ENCODE measurements at regions of chr2 and their contacts with region 1.

Region 1: DNA sequence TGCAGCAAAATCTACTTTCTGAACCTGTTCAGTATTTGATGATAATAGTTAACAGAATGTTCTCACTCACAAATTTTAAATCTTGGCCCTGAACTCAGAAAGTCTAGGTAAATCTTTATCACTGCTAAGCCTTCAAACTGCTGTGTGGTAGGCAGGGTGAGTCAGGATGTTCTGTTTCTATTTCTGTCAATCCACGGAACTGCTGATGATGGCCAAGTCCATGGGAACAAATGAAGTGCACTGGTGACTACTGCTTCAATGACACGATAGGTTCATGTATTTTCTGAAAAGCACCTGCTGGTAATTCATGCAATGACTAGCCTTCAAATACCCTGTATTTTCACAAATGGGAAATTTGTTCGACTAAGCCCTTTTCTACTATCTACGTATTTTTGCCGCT is 14.2 kb downstream of the NIFK start:
- DNase-seq: no peak
- H3K4me3 ChIP-seq: no peak overlapping the region
- H3K27ac ChIP-seq: no peak overlapping the region
- H3K4me1 ChIP-seq: no peaks in the 10 kb centered on the region
- H3K27me3 ChIP-seq: no peaks in the 10 kb centered on the region
- CTCF ChIP-seq: no peak
- POLR2A ChIP-seq: no peak

Region 2: DNA sequence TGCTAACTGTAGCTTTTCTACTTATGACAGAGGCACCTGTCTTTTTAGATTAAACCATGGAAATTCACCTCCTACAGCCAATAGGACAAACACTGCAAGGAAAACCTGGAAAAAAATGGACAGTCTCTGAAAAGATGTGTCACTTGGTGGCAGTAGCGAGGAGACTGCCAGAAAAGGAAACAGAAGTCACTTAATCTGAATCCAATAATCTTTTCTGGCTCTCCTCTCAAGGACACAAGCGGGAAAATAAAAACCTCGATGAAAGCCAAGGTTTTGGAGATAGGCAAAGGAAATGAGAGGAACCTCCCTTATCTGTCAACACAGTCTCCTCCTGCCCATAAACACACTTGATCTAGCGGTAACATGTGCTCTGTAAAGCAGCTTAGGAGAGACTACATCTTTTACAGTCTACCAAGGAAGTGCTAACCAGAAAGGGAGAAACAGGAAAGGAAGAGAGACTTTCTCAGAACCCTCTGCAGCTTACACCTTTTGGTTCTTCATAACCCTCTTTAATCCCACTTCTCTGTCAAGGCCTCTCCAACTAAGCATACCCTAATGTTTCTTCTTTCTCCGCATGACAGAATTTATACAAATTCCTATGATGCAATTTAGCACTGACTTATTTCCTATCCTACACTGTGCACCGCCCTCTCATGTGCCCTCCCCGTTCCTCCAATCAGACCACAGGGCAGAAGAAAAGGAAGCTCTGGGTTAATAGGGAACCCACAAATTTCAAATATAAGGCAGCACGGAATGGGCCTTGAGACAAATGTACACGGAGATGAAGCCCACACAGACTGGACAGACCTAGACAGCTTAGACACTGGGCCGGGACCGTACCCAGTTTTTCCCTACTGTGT is 126.0 kb before region 1 on chr2:
- CTCF ChIA-PET with region 1: interaction called, 11 read pairs
- POLR2A ChIA-PET with region 1: no interaction called
- dilution Hi-C with region 1: no loop called
- intact Hi-C with region 1: loop called (anchors 1 kb)
- DNase-seq: peak; percentile 81
- H3K4me3 ChIP-seq: peak overlapping the region in 2 of 3 experiments; percentile 3 to 62
- H3K27ac ChIP-seq: peak overlapping the region; percentile 56
- H3K4me1 ChIP-seq: peaks cover 14% of the 10 kb centered on the region
- H3K27me3 ChIP-seq: no peaks in the 10 kb centered on the region
- CTCF ChIP-seq: peak; percentile 29 to 35
- POLR2A ChIP-seq: no peak

Region 3: DNA sequence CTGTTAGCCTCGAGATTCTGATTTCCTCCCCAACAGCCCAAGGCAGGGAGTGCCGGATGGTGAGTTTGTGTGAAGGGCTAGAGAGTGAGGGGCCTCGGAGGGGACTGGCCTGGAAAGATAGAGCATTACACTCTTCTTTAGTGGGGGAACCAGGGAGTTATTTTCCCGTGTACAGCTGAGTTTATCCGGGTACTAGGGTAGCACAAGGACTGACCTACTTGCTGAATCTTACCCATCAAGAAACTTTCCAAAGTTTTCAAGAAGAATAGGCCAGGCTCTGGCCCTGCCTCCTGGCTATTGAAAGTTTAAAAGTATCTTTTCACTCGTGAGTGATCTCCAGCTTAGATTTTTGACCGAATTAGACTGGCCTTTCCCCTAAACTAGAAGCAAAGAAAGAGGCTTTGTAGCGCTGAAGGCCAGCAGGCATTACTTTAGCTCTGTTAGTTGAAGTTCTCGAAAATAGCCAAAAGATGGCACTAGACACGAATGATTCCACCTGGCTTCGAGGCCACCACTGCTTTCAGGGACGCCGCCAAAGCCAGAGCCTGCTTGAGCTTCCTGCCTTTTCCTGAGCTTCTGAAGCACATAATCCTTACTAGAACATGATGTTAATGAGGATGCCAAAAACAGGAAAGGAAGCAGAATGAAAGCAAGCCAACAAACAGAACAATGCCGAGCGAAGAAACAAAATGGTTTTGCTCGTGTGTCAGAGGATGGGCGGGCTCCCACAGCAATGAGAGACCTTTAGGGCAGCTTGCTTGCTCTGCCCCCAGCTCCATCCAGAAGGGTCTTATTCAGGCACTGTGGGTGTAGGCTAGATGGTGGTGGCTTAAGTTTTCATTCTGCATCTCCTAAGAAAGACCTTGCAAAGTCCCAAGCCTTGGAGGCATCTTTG is 88.7 kb after region 1 on chr2:
- CTCF ChIA-PET with region 1: no interaction called
- POLR2A ChIA-PET with region 1: no interaction called
- dilution Hi-C with region 1: no loop called
- intact Hi-C with region 1: no loop called
- DNase-seq: peak; percentile 62
- H3K4me3 ChIP-seq: no peak overlapping the region
- H3K27ac ChIP-seq: no peak overlapping the region
- H3K4me1 ChIP-seq: no peaks in the 10 kb centered on the region
- H3K27me3 ChIP-seq: peaks cover 0 to 2% of the 10 kb centered on the region in 2 experiments
- CTCF ChIP-seq: peak; percentile 50 to 61
- POLR2A ChIP-seq: no peak

Region 4: DNA sequence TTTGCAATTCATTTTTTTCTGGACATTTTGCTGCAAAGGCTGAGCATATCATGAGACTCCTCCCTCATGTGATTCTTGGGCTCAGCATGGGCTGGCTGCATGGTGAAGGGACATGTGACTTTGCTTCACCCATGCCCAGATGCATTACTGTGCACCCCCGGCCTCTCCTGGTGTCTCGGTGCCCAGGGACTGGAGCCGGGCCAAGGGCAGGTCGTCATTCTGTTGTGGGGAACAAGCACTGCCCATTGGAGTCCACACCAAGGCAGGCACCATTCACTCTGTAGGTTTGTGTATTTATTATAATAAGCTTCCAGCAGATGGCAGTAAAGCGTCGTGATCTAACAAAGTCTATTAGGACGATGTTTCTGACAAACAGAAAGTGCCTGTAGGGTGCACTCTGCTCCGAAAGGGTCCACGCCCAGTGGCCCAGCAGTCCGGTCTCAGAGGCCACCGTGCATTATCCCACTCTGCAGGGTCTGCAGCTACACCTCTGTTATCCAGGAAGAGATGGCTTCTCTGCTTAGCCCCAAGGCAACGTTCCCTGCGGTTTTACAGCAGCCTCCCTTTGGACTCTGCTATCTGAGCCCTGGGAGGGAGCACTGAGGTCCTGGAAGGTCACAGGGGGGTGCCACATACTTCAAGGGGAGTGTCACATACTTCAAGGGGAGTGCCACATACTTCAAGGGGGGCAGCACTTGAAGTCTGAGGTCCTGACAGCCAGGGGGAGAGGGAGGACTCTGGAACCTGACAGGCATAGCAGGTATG is 252.6 kb after region 1 on chr2:
- CTCF ChIA-PET with region 1: no interaction called
- POLR2A ChIA-PET with region 1: no interaction called
- dilution Hi-C with region 1: no loop called
- intact Hi-C with region 1: no loop called
- DNase-seq: peak; percentile 60
- H3K4me3 ChIP-seq: no peak overlapping the region
- H3K27ac ChIP-seq: no peak overlapping the region
- H3K4me1 ChIP-seq: no peaks in the 10 kb centered on the region
- H3K27me3 ChIP-seq: peaks cover 0 to under 1% of the 10 kb centered on the region in 2 experiments
- CTCF ChIP-seq: peak; percentile 29 to 36
- POLR2A ChIP-seq: no peak

Measured in endothelial cell of umbilical vein (primary cell).